ENCODE measurements at regions of chr11 and their contacts with region 1.

Region 1: GRCh38 chr11:19344751-19345518 is 104.2 kb upstream of the E2F8 start:
- DNase-seq: peak; percentile 24
- ATAC-seq: peak; percentile 90
- H3K4me3 ChIP-seq: peak overlapping the region; percentile 13; the same call in 1 of the 2 replicates
- H3K27ac ChIP-seq: no peak overlapping the region
- H3K4me1 ChIP-seq: peaks cover 4% of the 10 kb centered on the region; the same call in 1 of the 2 replicates
- H3K27me3 ChIP-seq: peaks cover 82% of the 10 kb centered on the region
- CTCF ChIP-seq: no peak
- POLR2A ChIP-seq: no peak
- RAD21 ChIP-seq: no peak

Region 2: GRCh38 chr11:19276859-19277808 is 67.8 kb before region 1 on chr11:
- CTCF ChIA-PET with region 1: no interaction called
- POLR2A ChIA-PET with region 1: no interaction called
- dilution Hi-C with region 1: no loop called
- in situ Hi-C with region 1: no loop called
- intact Hi-C with region 1: no loop called
- DNase-seq: no peak
- ATAC-seq: peak; percentile 29
- H3K4me3 ChIP-seq: no peak overlapping the region
- H3K27ac ChIP-seq: no peak overlapping the region
- H3K4me1 ChIP-seq: no peaks in the 10 kb centered on the region
- H3K27me3 ChIP-seq: peaks cover 10% of the 10 kb centered on the region
- CTCF ChIP-seq: no peak
- POLR2A ChIP-seq: no peak
- RAD21 ChIP-seq: no peak

Region 3: GRCh38 chr11:19332470-19332869 is 12.5 kb before region 1 on chr11:
- CTCF ChIA-PET with region 1: no interaction called
- POLR2A ChIA-PET with region 1: no interaction called
- dilution Hi-C with region 1: no loop called
- in situ Hi-C with region 1: no loop called
- intact Hi-C with region 1: no loop called
- DNase-seq: no peak
- ATAC-seq: no peak
- H3K4me3 ChIP-seq: no peak overlapping the region
- H3K27ac ChIP-seq: no peak overlapping the region
- H3K4me1 ChIP-seq: no peaks in the 10 kb centered on the region
- H3K27me3 ChIP-seq: peaks cover 57% of the 10 kb centered on the region
- CTCF ChIP-seq: no peak
- POLR2A ChIP-seq: no peak
- RAD21 ChIP-seq: no peak

Region 4: GRCh38 chr11:19441752-19442553 is 97.0 kb after region 1 on chr11:
- CTCF ChIA-PET with region 1: no interaction called
- POLR2A ChIA-PET with region 1: no interaction called
- dilution Hi-C with region 1: no loop called
- in situ Hi-C with region 1: no loop called
- intact Hi-C with region 1: loop called (anchors 5 kb)
- DNase-seq: peak; percentile 98
- ATAC-seq: peak; percentile 84
- H3K4me3 ChIP-seq: no peak overlapping the region
- H3K27ac ChIP-seq: peak overlapping the region; percentile 25
- H3K4me1 ChIP-seq: peaks cover 11% of the 10 kb centered on the region
- H3K27me3 ChIP-seq: peaks cover 7% of the 10 kb centered on the region; the same call in 1 of the 2 replicates
- CTCF ChIP-seq: no peak
- POLR2A ChIP-seq: no peak
- RAD21 ChIP-seq: no peak

Region 5: GRCh38 chr11:19499026-19499669 is 154.2 kb after region 1 on chr11:
- CTCF ChIA-PET with region 1: no interaction called
- POLR2A ChIA-PET with region 1: no interaction called
- dilution Hi-C with region 1: no loop called
- in situ Hi-C with region 1: no loop called
- intact Hi-C with region 1: loop called (anchors 5 kb)
- DNase-seq: peak; percentile 58
- ATAC-seq: peak; percentile 95
- H3K4me3 ChIP-seq: no peak overlapping the region
- H3K27ac ChIP-seq: no peak overlapping the region
- H3K4me1 ChIP-seq: no peaks in the 10 kb centered on the region
- H3K27me3 ChIP-seq: peaks cover 5% of the 10 kb centered on the region
- CTCF ChIP-seq: no peak
- POLR2A ChIP-seq: no peak
- RAD21 ChIP-seq: no peak